ENCODE measurements at regions of chr20 and their contacts with region 1.

Region 1: DNA sequence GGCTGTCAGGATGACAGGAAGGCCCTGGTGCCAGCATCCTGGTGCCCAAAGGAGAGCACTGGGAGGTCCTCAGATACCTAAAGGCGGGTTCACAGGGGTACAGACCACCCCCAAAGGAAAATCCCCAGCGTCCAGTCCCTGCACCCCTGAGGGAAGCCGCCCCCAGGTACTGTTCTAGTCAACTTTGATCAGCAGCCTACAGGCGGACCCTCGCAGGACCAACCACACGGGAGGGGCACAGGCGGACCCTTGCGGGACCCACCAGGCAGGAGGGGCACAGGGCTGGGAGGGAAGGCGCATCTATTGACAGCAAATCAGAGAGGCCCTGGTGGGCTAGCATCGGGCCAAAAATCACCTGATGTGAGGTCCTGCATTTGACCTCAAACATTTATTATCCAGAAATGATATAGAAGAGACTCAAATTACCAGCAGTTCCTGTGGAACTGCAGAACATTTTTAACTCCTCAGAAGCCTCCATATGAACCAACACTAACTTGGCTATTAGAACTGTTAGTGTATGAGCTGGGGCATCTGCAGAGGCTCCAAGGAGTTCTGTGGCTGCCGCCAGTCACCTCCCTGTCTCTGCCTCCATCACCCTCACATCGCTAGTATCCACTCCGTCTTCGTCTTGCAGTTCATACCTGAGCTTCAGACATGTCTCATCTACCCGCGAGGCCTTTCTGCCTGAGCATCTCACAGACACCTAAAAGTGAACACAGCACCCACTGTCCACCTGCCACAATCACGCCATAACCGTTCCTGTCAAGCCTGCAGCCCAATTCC is 89.7 kb upstream of the CST7 start:
- DNase-seq: no peak
- H3K4me3 ChIP-seq: no peak overlapping the region
- H3K27ac ChIP-seq: no peak overlapping the region
- H3K4me1 ChIP-seq: no peaks in the 10 kb centered on the region
- H3K27me3 ChIP-seq: no peaks in the 10 kb centered on the region
- CTCF ChIP-seq: no peak
- POLR2A ChIP-seq: no peak

Region 2: GRCh38 chr20:23869520-23869919 is 989.8 kb before region 1 on chr20:
- intact Hi-C with region 1: loop called (anchors 5 kb)
- DNase-seq: no peak
- H3K4me3 ChIP-seq: no peak overlapping the region
- H3K27ac ChIP-seq: no peak overlapping the region
- H3K4me1 ChIP-seq: no peaks in the 10 kb centered on the region
- H3K27me3 ChIP-seq: peaks cover 0 to 26% of the 10 kb centered on the region in 2 donors
- CTCF ChIP-seq: no peak
- POLR2A ChIP-seq: no peak

Region 3: DNA sequence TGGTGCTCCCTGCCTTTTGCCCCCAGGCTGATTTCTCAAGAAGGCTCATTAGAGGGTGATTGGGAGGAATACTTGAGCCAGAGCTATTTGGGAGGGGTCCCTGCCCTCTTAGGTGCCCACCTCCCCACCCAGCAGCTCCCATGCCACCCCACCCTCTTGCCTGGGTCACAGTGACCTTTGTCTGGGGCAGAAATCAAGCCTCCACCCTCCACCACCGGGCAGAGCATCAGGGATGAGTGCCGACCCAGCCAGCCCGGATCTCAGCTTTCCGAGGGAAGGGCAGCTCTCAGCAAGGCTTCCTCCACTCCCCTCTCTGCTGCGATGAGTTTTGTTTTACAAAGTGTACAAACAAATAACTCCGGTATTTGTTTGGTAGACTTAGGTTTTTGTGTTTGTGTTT is 47.0 kb before region 1 on chr20:
- intact Hi-C with region 1: loop called (anchors 1 kb)
- DNase-seq: no peak
- H3K4me3 ChIP-seq: no peak overlapping the region
- H3K27ac ChIP-seq: no peak overlapping the region
- H3K4me1 ChIP-seq: no peaks in the 10 kb centered on the region
- H3K27me3 ChIP-seq: peaks cover 0 to 23% of the 10 kb centered on the region in 2 donors
- CTCF ChIP-seq: no peak
- POLR2A ChIP-seq: no peak

Region 4: DNA sequence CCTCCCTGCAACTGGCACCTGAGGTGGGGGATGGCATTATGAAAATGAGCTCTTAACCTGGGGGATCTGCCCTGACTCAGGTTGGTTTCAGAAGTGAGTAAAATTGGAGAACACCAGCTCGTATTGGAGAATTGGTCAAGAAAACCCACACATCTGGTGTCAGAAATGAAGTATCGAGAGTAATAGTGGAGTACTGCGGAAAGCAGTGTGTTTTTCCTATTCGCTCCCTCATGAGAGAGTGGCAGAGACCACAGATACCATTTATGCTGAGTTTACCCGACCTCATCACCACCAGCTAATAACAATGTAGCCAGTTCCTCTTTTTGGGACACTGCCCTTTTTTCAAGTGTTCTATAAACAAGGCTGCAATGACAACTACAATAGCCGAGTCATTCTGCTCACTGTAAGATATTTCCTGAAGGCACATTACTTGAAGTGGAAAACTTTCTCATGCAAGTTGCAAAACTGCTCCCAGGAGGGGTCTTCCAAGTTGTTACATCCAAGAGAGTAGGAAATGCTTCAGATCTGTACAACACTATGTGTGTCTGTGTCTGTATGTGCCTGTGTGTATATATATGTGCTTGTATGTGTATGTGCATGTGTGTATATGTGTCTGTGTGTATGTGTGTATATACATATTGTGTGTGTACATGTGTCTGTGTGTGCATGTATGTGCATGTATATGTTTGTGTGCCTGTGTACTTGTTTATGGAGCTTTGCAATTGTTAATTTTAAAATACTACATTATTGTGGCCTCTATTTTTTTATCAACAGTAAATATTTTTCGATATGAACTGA is 16.2 kb before region 1 on chr20:
- intact Hi-C with region 1: no loop called
- DNase-seq: no peak
- H3K4me3 ChIP-seq: no peak overlapping the region
- H3K27ac ChIP-seq: no peak overlapping the region
- H3K4me1 ChIP-seq: no peaks in the 10 kb centered on the region
- H3K27me3 ChIP-seq: no peaks in the 10 kb centered on the region
- CTCF ChIP-seq: no peak
- POLR2A ChIP-seq: no peak

Measured in breast epithelium (tissue), 4 donors.